ENCODE measurements at regions of chr11 and their contacts with region 1.

Region 1: GRCh38 chr11:65477149-65477965 is 21.5 kb upstream of the MALAT1 start:
- DNase-seq: peak; percentile 98
- H3K4me3 ChIP-seq: peak overlapping the region; percentile 60
- H3K27ac ChIP-seq: peak overlapping the region; percentile 98
- H3K4me1 ChIP-seq: peaks cover 11% of the 10 kb centered on the region
- H3K27me3 ChIP-seq: no peaks in the 10 kb centered on the region
- CTCF ChIP-seq: no peak

Region 2: DNA sequence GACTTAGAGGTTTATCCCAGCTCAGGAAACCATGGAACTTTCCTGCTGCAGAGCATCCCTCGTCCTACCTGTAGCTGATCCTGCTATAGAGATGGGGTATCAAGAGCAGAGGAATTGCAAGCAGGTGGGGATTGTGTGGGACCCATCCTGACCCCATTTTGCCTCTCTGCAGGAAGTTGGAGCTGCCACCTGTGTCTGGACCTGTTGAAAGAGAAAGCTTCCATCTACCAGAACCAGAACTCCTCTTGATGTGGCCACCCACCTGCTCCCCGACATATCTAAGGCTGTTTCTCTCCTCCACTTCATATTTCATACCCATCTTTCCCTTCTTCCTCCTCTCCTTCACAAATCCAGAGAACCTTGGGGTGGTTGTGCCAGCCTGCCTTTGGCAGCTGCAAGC is 125.8 kb before region 1 on chr11:
- intact Hi-C with region 1: no loop called
- DNase-seq: no peak
- H3K4me3 ChIP-seq: no peak overlapping the region
- H3K27ac ChIP-seq: no peak overlapping the region
- H3K4me1 ChIP-seq: no peaks in the 10 kb centered on the region
- H3K27me3 ChIP-seq: no peaks in the 10 kb centered on the region
- CTCF ChIP-seq: no peak

Region 3: GRCh38 chr11:65497141-65498041 is 20.0 kb after region 1 on chr11:
- intact Hi-C with region 1: loop called (anchors 2 kb)
- DNase-seq: peak; percentile 98
- H3K4me3 ChIP-seq: peak overlapping the region; percentile 66
- H3K27ac ChIP-seq: peak overlapping the region; percentile 99
- H3K4me1 ChIP-seq: peaks cover 15% of the 10 kb centered on the region
- H3K27me3 ChIP-seq: no peaks in the 10 kb centered on the region
- CTCF ChIP-seq: no peak

Measured in colonic mucosa (tissue), 4 donors.